ENCODE measurements at regions of chr2 and their contacts with region 1.

Region 1: DNA sequence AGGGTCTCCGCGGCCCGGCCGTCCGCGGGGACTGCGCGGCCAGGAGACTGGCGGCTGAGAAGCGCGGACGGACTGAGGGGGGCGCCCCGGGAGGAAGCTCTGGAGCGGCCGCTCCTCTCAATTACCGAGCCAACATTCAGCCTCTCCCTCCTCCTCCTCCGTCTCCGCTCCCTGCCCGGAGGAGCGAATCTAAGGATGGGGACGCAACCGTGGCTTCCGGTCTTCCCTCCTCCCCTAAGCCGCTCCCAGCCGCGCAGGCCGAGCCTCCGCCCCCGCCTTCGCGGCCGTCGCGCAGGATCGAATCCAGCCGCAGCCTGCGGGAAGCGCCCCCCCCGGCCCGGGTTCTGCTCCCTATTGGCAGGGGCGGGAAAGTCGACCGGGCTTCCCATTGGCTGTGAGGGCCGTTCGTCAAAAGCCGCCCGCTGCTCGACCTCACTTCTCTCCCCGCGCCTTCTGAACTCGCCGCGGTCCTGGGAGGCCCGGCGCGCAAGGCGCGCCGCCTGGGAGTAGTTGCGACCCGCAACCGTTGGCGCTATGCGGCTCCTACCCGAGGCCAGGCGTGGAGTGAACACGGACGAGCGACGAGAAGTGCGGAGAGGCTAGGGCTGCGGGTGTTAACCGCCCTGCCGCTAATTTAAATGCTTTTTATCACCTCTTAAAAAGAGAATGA is at the start of gene HNRNPLL:
- DNase-seq: peak; percentile 97
- ATAC-seq: peak; percentile 89
- H3K4me3 Mint-ChIP-seq: peak within 1 kb of the TSS; percentile 89
- H3K27ac Mint-ChIP-seq: peak within 1 kb of the TSS; percentile 90
- H3K4me1 Mint-ChIP-seq: peaks cover 50% of the 10 kb centered on the region
- H3K27me3 Mint-ChIP-seq: no peaks in the 10 kb centered on the region
- total RNA-seq, gene HNRNPLL: 46.5 to 46.6 TPM

Region 2: GRCh38 chr2:38634684-38635083 is 31.8 kb after region 1 on chr2:
- CTCF ChIA-PET with region 1: interaction called, 12 read pairs
- POLR2A ChIA-PET with region 1: no interaction called
- DNase-seq: no peak
- ATAC-seq: peak; percentile 73
- H3K4me3 Mint-ChIP-seq: peak overlapping the region; percentile 25
- H3K27ac Mint-ChIP-seq: peak overlapping the region; percentile 57
- H3K4me1 Mint-ChIP-seq: peaks cover 32% of the 10 kb centered on the region
- H3K27me3 Mint-ChIP-seq: no peaks in the 10 kb centered on the region

Region 3: GRCh38 chr2:38648107-38648761 is 45.4 kb after region 1 on chr2:
- CTCF ChIA-PET with region 1: interaction called, 76 read pairs
- POLR2A ChIA-PET with region 1: interaction called, 20 read pairs
- DNase-seq: no peak
- ATAC-seq: no peak
- H3K4me3 Mint-ChIP-seq: no peak overlapping the region
- H3K27ac Mint-ChIP-seq: peak overlapping the region; percentile 64
- H3K4me1 Mint-ChIP-seq: peaks cover 65% of the 10 kb centered on the region
- H3K27me3 Mint-ChIP-seq: no peaks in the 10 kb centered on the region

Region 4: DNA sequence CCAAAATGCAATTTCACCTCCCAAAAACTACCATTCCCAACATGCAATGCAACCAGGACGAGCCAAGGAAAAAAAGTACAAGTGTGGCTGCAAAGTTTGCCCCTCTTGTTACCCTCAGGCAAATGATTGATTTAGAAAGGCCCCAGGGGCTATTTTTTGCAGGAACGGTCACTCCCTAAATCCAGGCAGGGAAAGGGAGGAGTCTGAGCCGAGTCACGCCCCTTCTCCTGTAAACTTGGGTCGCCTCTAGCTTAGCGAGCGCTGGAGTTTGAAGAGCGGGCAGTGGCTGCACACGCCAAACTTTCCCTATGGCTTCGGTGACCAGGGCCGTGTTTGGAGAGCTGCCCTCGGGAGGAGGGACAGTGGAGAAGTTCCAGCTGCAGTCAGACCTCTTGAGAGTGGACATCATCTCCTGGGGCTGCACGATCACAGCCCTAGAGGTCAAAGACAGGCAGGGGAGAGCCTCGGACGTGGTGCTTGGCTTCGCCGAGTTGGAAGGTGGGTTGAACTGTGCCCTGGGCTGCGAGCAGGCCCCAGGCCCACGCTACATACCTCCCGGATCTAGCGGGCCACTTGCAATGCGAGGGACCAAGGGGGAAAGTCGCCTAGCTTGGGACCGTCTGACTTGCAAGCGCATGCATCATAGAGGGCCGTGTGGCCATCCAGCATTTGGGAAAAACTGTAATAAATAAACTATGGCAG is 63.1 kb after region 1 on chr2 and contains the start of gene GALM:
- CTCF ChIA-PET with region 1: interaction called, 195 read pairs
- POLR2A ChIA-PET with region 1: interaction called, 70 read pairs
- DNase-seq: peak; percentile 73
- ATAC-seq: peak; percentile 45
- H3K4me3 Mint-ChIP-seq: peak within 1 kb of the TSS; percentile 82
- H3K27ac Mint-ChIP-seq: peak within 1 kb of the TSS; percentile 89
- H3K4me1 Mint-ChIP-seq: peaks cover 63% of the 10 kb centered on the region
- H3K27me3 Mint-ChIP-seq: no peaks in the 10 kb centered on the region
- total RNA-seq, gene GALM: 27.6 TPM

Region 5: GRCh38 chr2:38682008-38682575 is 79.2 kb after region 1 on chr2:
- CTCF ChIA-PET with region 1: interaction called, 57 read pairs
- POLR2A ChIA-PET with region 1: interaction called, 3 read pairs
- DNase-seq: no peak
- ATAC-seq: peak; percentile 56
- H3K4me3 Mint-ChIP-seq: no peak overlapping the region
- H3K27ac Mint-ChIP-seq: peak overlapping the region; percentile 34
- H3K4me1 Mint-ChIP-seq: peaks cover 42% of the 10 kb centered on the region
- H3K27me3 Mint-ChIP-seq: no peaks in the 10 kb centered on the region

Region 6: DNA sequence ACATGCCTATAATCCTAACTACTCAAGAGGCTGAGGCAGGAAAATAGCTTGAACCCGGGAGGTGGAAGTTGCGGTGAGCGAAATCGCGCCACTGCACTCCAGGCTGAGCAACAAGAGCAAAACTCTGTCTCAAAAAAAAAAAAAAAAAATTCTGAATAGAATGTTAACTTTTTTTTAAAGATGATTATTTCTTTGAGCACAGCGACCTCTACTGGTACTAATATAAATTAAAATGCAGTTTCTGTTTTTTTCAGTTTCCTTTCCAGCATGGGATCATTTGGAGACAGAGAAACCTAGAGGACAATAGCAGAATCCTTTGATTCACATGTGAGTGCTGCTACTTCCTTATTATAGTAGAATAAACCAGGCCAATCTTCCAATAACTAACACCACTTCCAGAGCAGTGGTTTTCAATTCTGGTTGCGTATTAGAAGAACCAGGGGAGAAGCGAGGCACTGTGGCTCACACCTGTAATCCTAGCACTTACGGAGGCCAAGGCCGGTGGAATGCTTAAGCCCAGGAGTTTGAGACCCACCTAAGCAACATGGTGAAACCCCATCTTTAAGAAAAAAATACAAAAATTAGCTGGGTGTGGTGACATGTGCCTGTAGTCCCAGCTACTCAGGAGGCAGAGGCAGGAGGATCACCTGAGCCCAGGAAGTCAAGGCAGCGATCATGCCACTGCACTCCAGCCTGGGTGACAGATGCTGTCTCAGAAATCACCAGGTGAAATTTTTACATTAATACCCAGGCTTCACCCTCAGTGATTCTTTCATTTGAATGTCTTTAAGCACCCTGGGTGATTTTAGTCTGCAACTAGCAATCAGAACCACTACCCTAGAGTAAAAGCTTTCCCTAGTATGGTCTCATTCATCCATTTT is 138.2 kb after region 1 on chr2:
- CTCF ChIA-PET with region 1: interaction called, 11 read pairs
- POLR2A ChIA-PET with region 1: interaction called, 85 read pairs
- DNase-seq: no peak
- ATAC-seq: peak; percentile 25
- H3K4me3 Mint-ChIP-seq: no peak overlapping the region
- H3K27ac Mint-ChIP-seq: no peak overlapping the region
- H3K4me1 Mint-ChIP-seq: peaks cover 31% of the 10 kb centered on the region
- H3K27me3 Mint-ChIP-seq: no peaks in the 10 kb centered on the region